ENCODE measurements at regions of chr21 and their contacts with region 1.

Region 1: DNA sequence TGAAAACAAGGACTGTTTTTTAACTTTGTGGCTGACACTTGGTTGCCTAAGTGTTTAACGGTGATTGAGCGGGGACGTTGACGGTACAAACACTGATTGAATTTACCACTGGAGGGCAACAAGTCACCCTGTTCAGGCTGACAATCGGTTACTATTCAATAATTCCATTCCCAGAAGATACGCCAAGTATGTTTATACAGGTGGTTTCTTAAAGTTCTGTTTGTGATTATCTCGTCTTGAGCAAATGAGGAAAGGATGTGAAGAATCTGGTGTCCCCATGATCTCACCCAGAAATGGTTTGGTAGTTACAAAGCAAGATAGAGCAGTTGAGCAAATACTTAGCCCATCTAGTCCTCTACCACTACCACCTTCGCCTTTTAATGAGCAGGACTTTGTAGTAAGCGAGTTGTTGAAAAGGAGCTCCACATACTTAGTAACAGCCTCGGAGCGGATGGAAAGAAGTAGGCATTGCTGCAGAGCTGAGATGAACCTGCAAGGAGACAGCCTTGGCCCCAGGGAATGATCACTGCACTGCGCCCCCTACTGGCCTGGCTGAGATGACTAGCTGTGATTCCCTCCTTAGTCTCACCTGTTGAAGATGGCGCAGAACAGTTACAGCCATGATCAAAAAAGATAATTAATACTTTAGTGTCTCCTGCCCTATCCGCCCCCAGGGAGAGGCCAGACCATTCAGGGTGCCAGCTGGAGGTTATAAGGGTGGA is 36.3 kb downstream of the IFNAR1 start:
- DNase-seq: peak; percentile 73 to 84 (median 79)
- H3K4me3 ChIP-seq: peak overlapping the region; percentile 76
- H3K4me3 Mint-ChIP-seq: peak overlapping the region; percentile 84 to 92 (median 87)
- H3K27ac ChIP-seq: peak overlapping the region; percentile 62
- H3K27ac Mint-ChIP-seq: peak overlapping the region; percentile 64 to 99 (median 90)
- H3K4me1 ChIP-seq: peaks cover 21% of the 10 kb centered on the region
- H3K4me1 Mint-ChIP-seq: peaks cover 16 to 24% (median 21%) of the 10 kb centered on the region in 3 donors
- H3K27me3 ChIP-seq: no peaks in the 10 kb centered on the region
- H3K27me3 Mint-ChIP-seq: peaks cover 0 to 3% of the 10 kb centered on the region in 2 donors

Region 2: GRCh38 chr21:33199516-33200217 is 161.4 kb before region 1 on chr21:
- CTCF ChIA-PET with region 1: interaction called, 17 read pairs
- POLR2A ChIA-PET with region 1: interaction called, 5 read pairs
- DNase-seq: peak; percentile 64 to 85 (median 74)
- H3K4me3 ChIP-seq: no peak overlapping the region
- H3K4me3 Mint-ChIP-seq: no peak overlapping the region
- H3K27ac ChIP-seq: no peak overlapping the region
- H3K27ac Mint-ChIP-seq: peak overlapping the region in 5 of 8 donors; percentile 23 to 67 (median 55)
- H3K4me1 ChIP-seq: peaks cover 9% of the 10 kb centered on the region
- H3K4me1 Mint-ChIP-seq: peaks cover 21 to 41% (median 30%) of the 10 kb centered on the region in 3 donors
- H3K27me3 ChIP-seq: no peaks in the 10 kb centered on the region
- H3K27me3 Mint-ChIP-seq: no peaks in the 10 kb centered on the region

Region 3: DNA sequence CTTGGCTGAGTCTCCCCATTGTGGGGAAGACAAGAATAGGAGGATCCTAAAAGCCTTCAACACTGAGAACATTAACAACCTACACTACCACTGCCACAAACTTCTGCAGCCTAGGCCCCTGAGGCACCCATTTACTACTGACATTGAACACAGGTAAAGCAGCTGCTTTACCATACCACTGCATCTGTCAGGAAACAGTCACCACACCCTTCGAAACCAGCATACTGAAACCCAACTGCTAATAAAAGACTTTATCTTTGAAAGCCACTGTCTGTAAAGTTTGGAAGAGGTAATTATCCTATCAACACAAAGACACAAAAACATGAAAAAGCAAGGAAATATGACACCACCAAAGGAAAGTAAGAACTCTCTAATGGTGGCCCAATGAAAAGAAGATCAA is 28.9 kb before region 1 on chr21:
- CTCF ChIA-PET with region 1: interaction called, 27 read pairs
- POLR2A ChIA-PET with region 1: interaction called, 6 read pairs
- DNase-seq: no peak
- H3K4me3 ChIP-seq: no peak overlapping the region
- H3K4me3 Mint-ChIP-seq: no peak overlapping the region
- H3K27ac ChIP-seq: no peak overlapping the region
- H3K27ac Mint-ChIP-seq: peak overlapping the region in 7 of 8 donors; percentile 6 to 92 (median 46)
- H3K4me1 ChIP-seq: peaks cover 44% of the 10 kb centered on the region
- H3K4me1 Mint-ChIP-seq: peaks cover 53 to 76% (median 53%) of the 10 kb centered on the region in 3 donors
- H3K27me3 ChIP-seq: no peaks in the 10 kb centered on the region
- H3K27me3 Mint-ChIP-seq: no peaks in the 10 kb centered on the region

Region 4: DNA sequence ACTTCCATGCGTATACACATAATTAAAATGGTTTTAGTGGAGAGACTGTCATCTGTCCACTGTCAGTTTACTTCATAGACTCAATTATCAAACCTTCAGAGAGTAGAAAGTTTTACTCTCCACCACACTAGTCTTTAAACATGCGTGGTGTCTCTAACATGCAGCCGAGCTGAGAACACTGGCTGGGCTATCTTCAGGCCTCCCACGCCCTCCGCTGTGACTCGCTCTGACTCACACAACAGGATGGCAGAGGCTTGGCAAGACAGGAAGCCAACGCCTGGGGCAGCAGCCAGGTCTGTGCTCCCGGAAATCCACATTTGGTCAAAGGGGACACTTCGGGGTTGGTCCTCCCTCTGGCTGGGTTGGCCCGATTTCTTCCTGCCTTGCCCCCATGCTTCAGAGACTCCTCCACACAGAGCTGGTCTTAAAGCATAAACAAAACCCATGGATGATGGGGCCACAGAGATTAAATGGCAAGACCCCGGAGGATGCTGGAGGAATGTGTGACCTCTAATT is 19.5 kb after region 1 on chr21:
- CTCF ChIA-PET with region 1: interaction called, 34 read pairs
- POLR2A ChIA-PET with region 1: interaction called, 37 read pairs
- DNase-seq: peak; percentile 60 to 89 (median 69)
- H3K4me3 ChIP-seq: no peak overlapping the region
- H3K4me3 Mint-ChIP-seq: peak overlapping the region; percentile 26 to 75 (median 56)
- H3K27ac ChIP-seq: peak overlapping the region; percentile 3
- H3K27ac Mint-ChIP-seq: peak overlapping the region; percentile 4 to 87 (median 64)
- H3K4me1 ChIP-seq: peaks cover 58% of the 10 kb centered on the region
- H3K4me1 Mint-ChIP-seq: peaks cover 55 to 63% (median 60%) of the 10 kb centered on the region in 3 donors
- H3K27me3 ChIP-seq: no peaks in the 10 kb centered on the region
- H3K27me3 Mint-ChIP-seq: peaks cover 13 to 19% of the 10 kb centered on the region in 2 donors

Region 5: GRCh38 chr21:33443194-33443593 is 82.2 kb after region 1 on chr21:
- CTCF ChIA-PET with region 1: interaction called, 33 read pairs
- POLR2A ChIA-PET with region 1: no interaction called
- DNase-seq: no peak
- H3K4me3 ChIP-seq: no peak overlapping the region
- H3K4me3 Mint-ChIP-seq: no peak overlapping the region
- H3K27ac ChIP-seq: no peak overlapping the region
- H3K27ac Mint-ChIP-seq: peak overlapping the region in 1 of 8 donors; percentile 79
- H3K4me1 ChIP-seq: no peaks in the 10 kb centered on the region
- H3K4me1 Mint-ChIP-seq: peaks cover 0 to 5% (median 3%) of the 10 kb centered on the region in 3 donors
- H3K27me3 ChIP-seq: no peaks in the 10 kb centered on the region
- H3K27me3 Mint-ChIP-seq: no peaks in the 10 kb centered on the region

Measured in CD8-positive, alpha-beta memory T cell (primary cell).